PC-9 (cell line): ENCODE measurements at regions of chr20 and their contacts with region 1.

Region 1: DNA sequence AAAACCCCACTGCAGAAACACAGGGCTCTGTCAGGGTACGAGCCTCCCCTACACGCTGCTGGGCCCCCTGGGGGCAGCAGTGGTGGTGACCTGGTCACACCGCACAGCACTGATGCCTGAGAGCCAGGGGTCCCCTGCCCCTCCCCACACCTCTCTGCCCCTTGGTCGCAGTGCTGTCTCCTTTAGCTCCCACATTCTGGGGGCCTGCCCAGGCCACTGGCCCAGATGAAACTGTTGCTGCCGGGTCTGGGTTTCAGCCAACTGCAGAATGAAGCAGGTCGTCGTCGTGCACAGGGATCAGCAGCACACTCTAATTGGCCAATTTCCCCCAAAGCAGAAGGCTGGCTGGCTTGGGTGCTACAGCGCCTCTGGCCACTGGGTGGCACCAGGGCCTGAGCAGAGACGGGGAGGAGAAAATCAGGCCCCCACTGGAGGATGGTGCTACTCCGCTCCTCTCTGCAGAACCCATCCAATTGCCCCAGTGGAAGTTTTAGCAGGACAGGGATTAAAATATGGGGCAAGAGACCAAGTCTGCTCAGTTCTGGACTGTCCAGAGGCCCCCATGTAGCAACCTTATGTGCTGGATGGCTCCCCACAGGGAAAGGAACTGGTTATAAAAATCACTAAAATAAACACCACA is 26.1 kb downstream of the DIDO1 start:
- DNase-seq: peak in 1 of 2 experiments; percentile 65
- H3K4me3 ChIP-seq: no peak overlapping the region
- H3K27ac ChIP-seq: peak overlapping the region; percentile 45
- H3K4me1 ChIP-seq: peaks cover 8% of the 10 kb centered on the region
- H3K27me3 ChIP-seq: no peaks in the 10 kb centered on the region
- CTCF ChIP-seq: peak; percentile 82

Region 2: GRCh38 chr20:62822788-62823651 is 77.2 kb before region 1 on chr20:
- CTCF ChIA-PET with region 1: interaction called, 11 read pairs
- POLR2A ChIA-PET with region 1: no interaction called
- intact Hi-C with region 1: loop called (anchors 2 kb)
- DNase-seq: peak; percentile 80 to 87
- H3K4me3 ChIP-seq: no peak overlapping the region
- H3K27ac ChIP-seq: no peak overlapping the region
- H3K4me1 ChIP-seq: peaks cover 36% of the 10 kb centered on the region
- H3K27me3 ChIP-seq: no peaks in the 10 kb centered on the region
- CTCF ChIP-seq: peak; percentile 79

Region 3: DNA sequence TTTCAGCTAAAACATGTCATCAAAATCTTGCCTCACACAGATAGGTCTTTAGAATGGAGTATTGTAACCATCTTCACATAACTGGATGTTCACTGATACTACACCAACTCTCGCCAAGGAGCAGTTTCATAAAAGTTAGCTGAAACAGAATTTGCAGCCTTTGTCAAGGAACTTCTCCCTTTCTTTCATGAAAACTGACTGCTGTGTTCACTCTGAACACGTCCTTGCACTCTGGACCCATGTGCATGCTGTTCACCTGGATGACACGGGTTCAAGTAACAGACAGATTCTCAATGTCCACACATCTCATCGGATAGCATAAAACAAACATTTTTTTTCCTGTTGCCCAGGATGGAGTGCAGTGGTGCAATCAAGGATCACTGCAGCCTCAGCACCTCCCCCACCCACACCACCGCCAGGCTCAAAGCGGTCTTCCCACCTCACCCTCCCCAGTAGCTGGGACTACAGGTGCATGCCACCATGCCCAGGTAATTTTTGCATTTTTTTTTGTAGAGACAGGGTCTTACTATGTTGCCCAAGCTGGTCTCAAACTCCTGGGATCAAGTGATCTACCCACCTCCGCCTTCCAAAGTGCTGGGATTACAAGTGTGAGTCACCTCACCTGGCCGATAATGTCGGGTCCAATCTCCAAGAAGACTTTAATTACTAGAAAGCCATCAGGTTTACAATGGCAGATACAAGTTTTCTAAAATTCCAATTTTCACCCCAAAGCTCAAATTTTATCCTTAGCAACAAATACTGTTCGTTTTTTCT is 16.7 kb after region 1 on chr20:
- CTCF ChIA-PET with region 1: interaction called, 4 read pairs
- POLR2A ChIA-PET with region 1: no interaction called
- intact Hi-C with region 1: loop called (anchors 2 kb)
- DNase-seq: no peak
- H3K4me3 ChIP-seq: no peak overlapping the region
- H3K27ac ChIP-seq: no peak overlapping the region
- H3K4me1 ChIP-seq: no peaks in the 10 kb centered on the region
- H3K27me3 ChIP-seq: no peaks in the 10 kb centered on the region
- CTCF ChIP-seq: no peak

Region 4: GRCh38 chr20:62937366-62938104 is 37.4 kb after region 1 on chr20:
- CTCF ChIA-PET with region 1: no interaction called
- POLR2A ChIA-PET with region 1: no interaction called
- intact Hi-C with region 1: loop called (anchors 1 kb)
- DNase-seq: peak; percentile 87 to 98
- H3K4me3 ChIP-seq: peak overlapping the region; percentile 99
- H3K27ac ChIP-seq: peak overlapping the region; percentile 67
- H3K4me1 ChIP-seq: peaks cover 19% of the 10 kb centered on the region
- H3K27me3 ChIP-seq: no peaks in the 10 kb centered on the region
- CTCF ChIP-seq: no peak

Region 5: GRCh38 chr20:62972270-62973032 is 72.3 kb after region 1 on chr20:
- CTCF ChIA-PET with region 1: no interaction called
- POLR2A ChIA-PET with region 1: no interaction called
- intact Hi-C with region 1: loop called (anchors 1 kb)
- DNase-seq: peak; percentile 64 to 86
- H3K4me3 ChIP-seq: no peak overlapping the region; the same call in 1 of the 2 replicates
- H3K27ac ChIP-seq: no peak overlapping the region
- H3K4me1 ChIP-seq: 0 out of 2 replicates have a peak, but pooled peaks cover 3% of the 10 kb centered on the region
- H3K27me3 ChIP-seq: peaks cover 95% of the 10 kb centered on the region
- CTCF ChIP-seq: peak; percentile 88

Region 6: GRCh38 chr20:63009045-63009961 is 109.1 kb after region 1 on chr20:
- CTCF ChIA-PET with region 1: no interaction called
- POLR2A ChIA-PET with region 1: no interaction called
- intact Hi-C with region 1: loop called (anchors 1 kb)
- DNase-seq: peak; percentile 60 to 79
- H3K4me3 ChIP-seq: no peak overlapping the region
- H3K27ac ChIP-seq: no peak overlapping the region
- H3K4me1 ChIP-seq: no peaks in the 10 kb centered on the region
- H3K27me3 ChIP-seq: peaks cover 49% of the 10 kb centered on the region
- CTCF ChIP-seq: peak; percentile 95